ENCODE measurements at regions of chr4 and their contacts with region 1.

Region 1: DNA sequence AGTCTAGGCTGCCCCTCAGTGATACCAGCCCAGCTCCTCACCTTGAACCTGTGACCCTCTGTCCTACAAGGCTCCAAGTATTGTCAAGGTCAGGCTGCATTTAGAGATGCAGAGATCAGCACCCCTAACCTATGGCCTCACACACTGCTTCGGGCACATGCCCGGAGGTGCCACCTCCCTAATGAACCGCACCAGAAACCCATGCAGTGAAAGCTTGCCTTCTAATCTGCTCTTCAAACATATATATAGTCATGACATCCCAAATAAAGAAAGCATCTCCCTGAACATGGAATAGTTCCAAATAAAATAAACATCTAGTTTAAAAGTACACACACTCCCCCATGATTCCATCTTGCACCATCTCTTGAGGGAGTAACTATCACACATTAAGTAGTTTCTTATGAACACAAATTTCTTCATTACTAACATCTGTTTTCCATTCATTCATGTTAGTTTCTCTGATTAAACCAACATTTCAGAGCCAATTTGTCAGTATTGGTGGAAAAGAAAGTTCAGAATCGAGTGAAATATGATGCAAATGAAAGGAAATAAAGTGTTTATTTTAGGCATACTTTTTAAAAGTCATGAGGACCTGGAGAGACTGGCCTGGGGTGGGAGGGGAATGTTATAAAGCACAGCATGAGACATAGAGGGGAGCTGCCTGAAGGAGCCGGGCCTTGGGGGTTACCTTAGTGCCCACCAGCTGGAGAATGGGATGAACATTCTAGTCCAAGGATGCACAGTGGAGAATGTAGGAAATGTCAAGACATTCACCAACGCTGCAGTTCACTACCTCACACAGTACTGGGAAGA is 19.2 kb downstream of the CC2D2A start:
- DNase-seq: no peak
- ATAC-seq: peak; percentile 81

Region 2: GRCh38 chr4:15649914-15650545 is 161.2 kb after region 1 on chr4:
- intact Hi-C with region 1: loop called (anchors 10 kb)
- DNase-seq: no peak
- ATAC-seq: peak; percentile 73

Measured in Right ventricle myocardium superior (tissue), 1 donor.